ENCODE measurements at regions of chr1 and their contacts with region 1.

Region 1: GRCh38 chr1:228120857-228121489 is 11.9 kb upstream of the MRPL55 start:
- DNase-seq: no peak
- H3K4me3 ChIP-seq: no peak overlapping the region
- H3K27ac ChIP-seq: no peak overlapping the region
- H3K4me1 ChIP-seq: no peaks in the 10 kb centered on the region
- H3K27me3 ChIP-seq: peaks cover 20 to 21% of the 10 kb centered on the region in 2 experiments
- CTCF ChIP-seq: no peak
- POLR2A ChIP-seq: no peak

Region 2: GRCh38 chr1:227712648-227713047 is 408.3 kb before region 1 on chr1:
- CTCF ChIA-PET with region 1: no interaction called
- POLR2A ChIA-PET with region 1: no interaction called
- dilution Hi-C with region 1: no loop called
- intact Hi-C with region 1: no loop called
- DNase-seq: no peak
- H3K4me3 ChIP-seq: no peak overlapping the region
- H3K27ac ChIP-seq: no peak overlapping the region
- H3K4me1 ChIP-seq: no peaks in the 10 kb centered on the region
- H3K27me3 ChIP-seq: no peaks in the 10 kb centered on the region
- CTCF ChIP-seq: no peak
- POLR2A ChIP-seq: no peak

Region 3: GRCh38 chr1:228180271-228180958 is 59.4 kb after region 1 on chr1:
- CTCF ChIA-PET with region 1: no interaction called
- POLR2A ChIA-PET with region 1: no interaction called
- dilution Hi-C with region 1: loop called (anchors 10 kb)
- intact Hi-C with region 1: no loop called
- DNase-seq: no peak
- H3K4me3 ChIP-seq: no peak overlapping the region
- H3K27ac ChIP-seq: no peak overlapping the region
- H3K4me1 ChIP-seq: no peaks in the 10 kb centered on the region
- H3K27me3 ChIP-seq: no peaks in the 10 kb centered on the region
- CTCF ChIP-seq: peak in 1 of 2 donors; percentile 24
- POLR2A ChIP-seq: no peak

Measured in endothelial cell of umbilical vein (primary cell).